A549 (cell line): ENCODE measurements at regions of chr19 and their contacts with region 1.

Region 1: GRCh38 chr19:14432791-14433553 is at the start of gene PKN1:
- DNase-seq: peak; percentile 29 to 35
- ATAC-seq: peak; percentile 11 to 54; a peak in 4 of 6 replicates
- H3K4me3 ChIP-seq: peak within 1 kb of the TSS; percentile 92
- H3K27ac ChIP-seq: peak within 1 kb of the TSS; percentile 91 to 98
- H3K4me1 ChIP-seq: peaks cover 30% of the 10 kb centered on the region
- CTCF ChIP-seq: no peak; the same call in 2 of the 3 replicates
- EP300 ChIP-seq: no peak
- POLR2A ChIP-seq: peak; percentile 19; the same call in 1 of the 2 replicates
- RAD21 ChIP-seq: no peak
- polyA plus RNA-seq, gene PKN1: 26.5 and 33.4 TPM in 2 replicates

Region 2: GRCh38 chr19:14419106-14419813 is 13.7 kb before region 1 on chr19 and contains the start of gene DDX39A:
- CTCF ChIA-PET with region 1: interaction called, 15 read pairs
- POLR2A ChIA-PET with region 1: no interaction called
- DNase-seq: peak; percentile 94 to 99
- ATAC-seq: peak; percentile 98 to 100
- H3K4me3 ChIP-seq: peak within 1 kb of the TSS; percentile 92
- H3K27ac ChIP-seq: peak within 1 kb of the TSS; percentile 93 to 97
- H3K4me1 ChIP-seq: peaks cover 18% of the 10 kb centered on the region
- CTCF ChIP-seq: no peak
- EP300 ChIP-seq: no peak
- POLR2A ChIP-seq: no peak; the same call in 1 of the 2 replicates
- RAD21 ChIP-seq: no peak
- polyA plus RNA-seq, gene DDX39A: 57.9 and 59.0 TPM in 2 replicates

Region 3: GRCh38 chr19:14472202-14472938 is 39.4 kb after region 1 on chr19:
- CTCF ChIA-PET with region 1: interaction called, 12 read pairs
- POLR2A ChIA-PET with region 1: no interaction called
- DNase-seq: peak; percentile 50 to 57
- ATAC-seq: peak; percentile 16 to 61; a peak in 4 of 6 replicates
- H3K4me3 ChIP-seq: no peak overlapping the region
- H3K27ac ChIP-seq: peak overlapping the region in 1 of 2 experiments; percentile 65; a peak in 2 of 6 replicates
- H3K4me1 ChIP-seq: peaks cover 27% of the 10 kb centered on the region
- CTCF ChIP-seq: peak; percentile 63
- EP300 ChIP-seq: no peak
- POLR2A ChIP-seq: no peak
- RAD21 ChIP-seq: peak; percentile 37 to 43; a peak in 4 of 5 replicates

Region 4: DNA sequence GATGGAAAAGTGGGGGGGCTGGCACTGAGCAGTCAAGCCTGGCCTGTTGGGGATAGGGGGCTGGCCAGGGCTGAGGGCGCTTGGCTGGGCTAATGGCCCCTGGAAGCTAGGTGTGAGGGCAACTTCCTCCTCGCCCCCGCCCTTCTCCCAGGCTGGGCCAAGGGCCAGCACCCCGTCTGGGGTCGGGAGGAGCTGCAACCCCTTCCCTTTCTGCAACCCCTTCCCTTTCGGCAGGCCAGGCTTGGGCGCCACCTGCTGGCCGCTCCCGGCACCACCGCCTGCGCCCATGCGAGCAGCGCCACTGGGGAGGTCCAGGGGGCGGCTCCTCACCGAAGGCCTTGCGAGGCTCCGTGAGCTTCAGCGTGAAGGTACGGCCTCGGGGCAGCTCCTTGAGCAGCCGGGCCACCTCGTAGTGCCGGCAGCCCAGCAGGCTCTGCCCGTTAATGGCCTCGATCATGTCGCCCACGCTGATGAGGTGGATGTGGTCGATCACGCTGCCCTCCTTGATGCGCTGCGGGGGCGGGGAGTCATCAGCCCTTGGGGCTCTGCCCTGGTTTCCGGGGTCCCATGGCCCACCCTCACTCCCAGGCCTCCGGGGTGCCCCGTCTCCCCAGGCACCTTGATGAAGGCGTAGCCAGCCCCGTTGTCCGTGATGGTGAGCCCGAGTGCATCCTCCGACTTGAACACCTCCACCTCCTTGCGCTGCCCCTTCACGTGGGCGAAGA is 47.2 kb after region 1 on chr19:
- CTCF ChIA-PET with region 1: interaction called, 11 read pairs
- POLR2A ChIA-PET with region 1: no interaction called
- DNase-seq: peak; percentile 60 to 63
- ATAC-seq: peak; percentile 42 to 75
- H3K4me3 ChIP-seq: no peak overlapping the region
- H3K27ac ChIP-seq: peak overlapping the region in 1 of 2 experiments; percentile 53; a peak in 2 of 6 replicates
- H3K4me1 ChIP-seq: peaks cover 30% of the 10 kb centered on the region
- CTCF ChIP-seq: peak; percentile 65
- EP300 ChIP-seq: no peak
- POLR2A ChIP-seq: no peak
- RAD21 ChIP-seq: peak; percentile 46 to 49